ENCODE measurements at regions of chr6 and their contacts with region 1.

Region 1: DNA sequence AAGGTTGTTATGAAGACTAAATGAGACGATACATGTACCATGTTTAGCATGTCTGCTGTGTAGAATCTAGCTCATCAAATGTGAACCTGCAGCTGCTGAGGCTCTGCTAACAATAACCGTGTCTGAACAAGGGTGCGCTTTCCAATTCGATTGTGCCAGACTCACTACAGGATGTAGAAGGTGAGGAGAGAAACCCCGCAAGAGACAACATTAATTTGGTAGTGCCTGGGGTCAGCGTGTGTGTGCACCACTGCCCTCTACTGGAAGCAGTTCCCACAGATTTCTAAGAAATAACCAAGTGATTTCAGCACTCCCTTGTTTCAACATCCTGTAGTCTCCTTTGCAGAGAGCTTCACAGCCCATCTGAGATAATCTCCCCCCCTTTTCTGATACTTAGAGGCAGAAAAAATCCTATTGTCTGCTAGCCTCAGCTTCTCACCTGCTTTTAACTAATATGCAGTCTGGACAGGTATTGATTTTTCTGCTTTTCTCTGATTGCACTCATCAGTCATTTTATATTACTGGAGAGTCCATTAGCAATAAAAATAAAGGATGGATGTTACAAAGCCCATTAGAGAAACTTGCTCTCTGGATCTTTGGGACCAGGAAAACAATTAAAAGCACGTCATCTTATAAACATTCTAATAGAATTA is 96.7 kb upstream of the BACH2 start:
- DNase-seq: peak; percentile 87
- ATAC-seq: peak; percentile 41
- H3K4me3 Mint-ChIP-seq: no peak overlapping the region
- H3K27ac Mint-ChIP-seq: peak overlapping the region; percentile 65
- H3K4me1 Mint-ChIP-seq: peaks cover 76% of the 10 kb centered on the region
- H3K27me3 Mint-ChIP-seq: no peaks in the 10 kb centered on the region

Region 2: GRCh38 chr6:89940225-89941027 is 452.9 kb before region 1 on chr6:
- CTCF ChIA-PET with region 1: interaction called, 7 read pairs
- POLR2A ChIA-PET with region 1: no interaction called
- intact Hi-C with region 1: loop called (anchors 2 to 5 kb)
- DNase-seq: peak; percentile 80
- ATAC-seq: peak; percentile 80
- H3K4me3 Mint-ChIP-seq: no peak overlapping the region
- H3K27ac Mint-ChIP-seq: peak overlapping the region; percentile 47
- H3K4me1 Mint-ChIP-seq: peaks cover 60% of the 10 kb centered on the region
- H3K27me3 Mint-ChIP-seq: no peaks in the 10 kb centered on the region

Region 3: GRCh38 chr6:90285611-90286381 is 107.6 kb before region 1 on chr6:
- CTCF ChIA-PET with region 1: interaction called, 63 read pairs
- POLR2A ChIA-PET with region 1: interaction called, 3 read pairs
- intact Hi-C with region 1: loop called (anchors 1 to 2 kb)
- DNase-seq: peak; percentile 75
- ATAC-seq: peak; percentile 40
- H3K4me3 Mint-ChIP-seq: peak overlapping the region; percentile 62
- H3K27ac Mint-ChIP-seq: peak overlapping the region; percentile 95
- H3K4me1 Mint-ChIP-seq: peaks cover 93% of the 10 kb centered on the region
- H3K27me3 Mint-ChIP-seq: no peaks in the 10 kb centered on the region

Region 4: DNA sequence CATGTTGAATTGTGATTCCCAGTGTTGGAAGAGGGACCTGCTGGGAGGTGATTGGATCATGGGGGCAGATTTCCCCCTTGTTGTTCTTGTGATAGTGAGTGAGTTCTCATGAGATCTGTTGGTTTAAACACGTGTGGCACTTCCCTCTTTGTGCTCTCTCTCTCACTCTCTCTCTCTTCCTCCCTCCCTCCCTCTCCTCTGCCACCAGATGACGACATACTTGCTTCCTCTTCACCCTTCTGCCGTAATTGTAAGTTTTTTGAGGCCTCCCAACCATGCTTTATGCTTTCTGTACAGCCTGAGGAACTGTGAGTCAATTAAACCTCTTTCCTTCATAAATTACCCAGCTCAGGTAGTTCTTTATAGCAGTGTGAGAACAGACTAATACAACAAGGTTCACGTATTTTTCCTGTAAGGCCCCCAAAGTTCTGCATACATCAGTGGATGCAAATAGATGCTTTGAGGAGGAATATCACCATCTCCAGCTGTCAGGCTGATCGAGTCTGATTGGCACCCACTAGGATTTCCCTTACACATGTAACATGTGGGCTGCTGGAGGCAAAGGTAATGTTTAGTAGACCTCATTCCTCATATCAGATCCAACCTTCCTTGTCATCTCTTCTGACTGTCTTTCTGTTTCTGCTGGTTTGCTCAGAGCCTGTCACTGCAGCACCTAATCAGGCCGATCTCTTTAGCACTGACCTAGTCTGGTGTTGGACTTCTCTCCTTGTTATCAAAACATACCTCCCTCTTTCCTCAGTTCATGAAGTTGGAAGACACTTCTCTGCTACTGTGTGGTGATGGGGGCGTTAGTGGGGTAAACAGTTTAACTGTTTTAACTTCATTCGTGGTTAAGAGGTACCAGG is 42.4 kb before region 1 on chr6:
- CTCF ChIA-PET with region 1: interaction called, 6 read pairs
- POLR2A ChIA-PET with region 1: interaction called, 4 read pairs
- intact Hi-C with region 1: loop called (anchors 2 kb)
- DNase-seq: peak; percentile 60
- ATAC-seq: peak; percentile 65
- H3K4me3 Mint-ChIP-seq: peak overlapping the region; percentile 44
- H3K27ac Mint-ChIP-seq: peak overlapping the region; percentile 91
- H3K4me1 Mint-ChIP-seq: peaks cover 54% of the 10 kb centered on the region
- H3K27me3 Mint-ChIP-seq: no peaks in the 10 kb centered on the region

Region 5: DNA sequence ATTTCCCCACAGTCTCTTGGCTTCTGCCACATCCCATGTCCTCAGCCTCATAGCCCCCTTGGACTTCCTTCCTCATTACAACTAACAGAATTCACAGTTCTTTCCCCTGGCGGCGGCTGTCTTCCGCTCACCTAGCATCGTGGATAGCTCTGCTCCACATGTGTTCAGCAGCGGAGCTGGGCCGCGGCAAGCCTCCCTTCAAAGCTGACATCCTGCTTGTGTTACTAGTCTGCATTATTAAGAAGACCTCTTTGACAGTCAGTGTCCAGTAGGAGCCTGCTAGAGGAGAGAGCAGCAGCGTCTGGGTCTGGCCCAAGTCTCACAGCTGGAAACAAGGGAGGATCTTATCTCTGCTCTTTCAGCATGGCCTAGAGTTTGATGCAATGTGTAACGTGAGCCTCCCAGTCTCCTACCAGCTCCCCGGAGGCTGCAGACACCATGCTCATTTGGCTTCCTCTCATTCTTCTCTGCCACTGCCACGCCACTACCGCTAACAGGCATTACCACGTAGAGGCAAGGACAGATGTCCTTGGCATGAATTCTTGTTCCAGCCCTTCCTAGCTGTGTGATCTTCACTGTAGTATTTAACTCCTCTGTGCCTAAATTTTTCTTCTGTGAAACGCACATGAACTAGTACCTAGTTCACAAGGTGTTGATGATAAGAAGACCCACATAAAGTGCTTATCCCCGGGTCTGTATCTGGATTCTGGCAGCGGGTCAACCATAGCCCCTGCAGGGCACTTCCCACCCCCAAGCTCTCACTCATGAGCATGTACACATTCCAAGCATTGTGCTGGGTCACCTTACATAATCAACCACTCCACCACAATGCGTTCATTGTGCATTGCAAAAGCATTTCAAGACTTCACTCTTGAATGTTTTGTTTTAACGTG is 10.4 kb after region 1 on chr6:
- CTCF ChIA-PET with region 1: interaction called, 7 read pairs
- POLR2A ChIA-PET with region 1: interaction called, 6 read pairs
- intact Hi-C with region 1: loop called in 1 of 2 experiments (anchors 1 kb)
- DNase-seq: no peak
- ATAC-seq: no peak
- H3K4me3 Mint-ChIP-seq: peak overlapping the region; percentile 20
- H3K27ac Mint-ChIP-seq: peak overlapping the region; percentile 69
- H3K4me1 Mint-ChIP-seq: peaks cover 81% of the 10 kb centered on the region
- H3K27me3 Mint-ChIP-seq: no peaks in the 10 kb centered on the region

Region 6: DNA sequence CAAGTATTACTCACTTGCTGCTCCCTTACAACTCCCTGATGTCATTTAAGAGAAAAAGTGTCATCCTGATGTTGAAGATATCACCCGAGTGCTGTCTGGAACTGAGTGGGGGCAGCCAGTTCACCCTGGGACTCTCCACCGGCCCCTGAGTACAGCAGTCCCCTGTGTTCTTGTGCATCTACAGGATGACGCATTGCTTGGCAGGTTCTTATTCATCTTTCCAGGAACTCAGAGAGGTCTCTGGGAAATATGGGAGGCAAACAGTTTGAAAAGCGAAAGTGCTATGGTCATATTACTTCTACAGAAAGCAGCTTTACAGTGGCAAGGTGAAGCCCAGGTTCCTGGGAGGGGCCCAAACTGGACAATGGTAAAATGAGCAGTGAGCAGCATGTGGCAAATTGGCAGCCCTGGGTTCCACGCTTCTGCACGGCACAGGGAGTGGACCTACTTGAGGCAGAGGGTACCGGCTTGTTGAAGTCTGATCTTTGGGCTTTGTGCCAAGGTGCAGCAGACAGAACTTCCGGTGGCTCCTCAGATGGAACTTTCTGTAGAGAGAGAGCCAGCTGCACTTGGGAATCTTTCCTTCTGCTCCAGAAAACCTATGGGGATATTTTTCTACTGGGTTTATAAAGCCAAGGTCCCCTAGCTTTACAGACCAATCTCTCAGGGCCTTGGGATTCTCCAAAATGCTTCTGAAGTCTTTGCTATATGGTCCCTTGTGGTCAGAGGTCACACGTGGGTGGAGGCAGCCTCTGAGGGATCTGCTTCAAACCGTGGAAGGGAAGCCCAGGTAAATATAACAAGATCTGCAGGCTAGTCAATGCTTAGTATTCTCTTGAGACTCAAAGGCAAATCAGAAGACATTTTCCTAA is 65.2 kb after region 1 on chr6:
- CTCF ChIA-PET with region 1: interaction called, 25 read pairs
- POLR2A ChIA-PET with region 1: interaction called, 10 read pairs
- intact Hi-C with region 1: loop called (anchors 1 kb)
- DNase-seq: peak; percentile 93
- ATAC-seq: peak; percentile 89
- H3K4me3 Mint-ChIP-seq: peak overlapping the region; percentile 63
- H3K27ac Mint-ChIP-seq: peak overlapping the region; percentile 99
- H3K4me1 Mint-ChIP-seq: peaks cover 92% of the 10 kb centered on the region
- H3K27me3 Mint-ChIP-seq: no peaks in the 10 kb centered on the region

Region 7: DNA sequence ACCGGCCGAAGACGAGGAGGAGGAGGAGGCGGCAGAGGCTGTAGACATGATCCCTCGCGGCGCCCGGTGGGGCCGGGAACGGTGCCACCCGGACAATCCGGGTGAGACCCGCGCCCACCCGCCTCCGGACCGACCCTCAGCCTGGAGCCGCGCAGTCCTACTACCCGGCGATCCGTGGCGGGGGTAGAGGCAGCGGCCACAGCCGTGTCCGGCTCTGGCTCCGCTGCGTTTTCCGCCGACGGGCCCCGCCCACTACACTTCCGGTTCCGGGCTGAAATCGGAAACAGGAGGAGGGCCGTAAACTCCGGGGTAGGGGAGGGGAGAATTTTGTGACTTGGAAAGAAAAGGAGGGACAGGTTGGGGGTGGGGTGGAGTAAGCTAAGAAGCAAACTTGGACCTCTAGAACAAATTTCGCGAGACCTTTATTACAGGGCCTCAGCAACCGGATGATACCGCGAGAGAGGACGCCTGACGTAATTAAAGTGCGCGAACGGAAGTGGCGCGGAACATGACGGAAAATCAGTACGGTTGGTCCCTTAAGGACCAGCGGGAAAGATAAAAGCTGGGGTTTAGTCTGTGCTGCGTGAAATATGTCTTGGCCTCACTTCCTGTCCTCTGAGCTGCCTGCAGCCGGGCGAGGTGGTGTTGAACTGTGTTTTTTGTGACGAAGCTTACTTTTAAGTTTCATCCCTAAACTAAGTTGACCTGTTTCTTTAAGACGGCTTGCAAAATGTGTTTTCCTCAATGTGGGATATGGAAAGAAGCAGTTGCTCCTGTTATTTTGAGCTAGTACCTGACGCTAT is 193.7 kb after region 1 on chr6 and contains the start of gene MAP3K7:
- CTCF ChIA-PET with region 1: no interaction called
- POLR2A ChIA-PET with region 1: no interaction called
- intact Hi-C with region 1: loop called in 1 of 2 experiments (anchors 5 kb)
- DNase-seq: peak; percentile 95
- ATAC-seq: peak; percentile 93
- H3K4me3 Mint-ChIP-seq: peak within 1 kb of the TSS; percentile 95
- H3K27ac Mint-ChIP-seq: peak within 1 kb of the TSS; percentile 98
- H3K4me1 Mint-ChIP-seq: peaks cover 40% of the 10 kb centered on the region
- H3K27me3 Mint-ChIP-seq: peaks cover 7% of the 10 kb centered on the region
- total RNA-seq, gene MAP3K7: 27.5 to 32.6 TPM

Region 8: GRCh38 chr6:91031581-91031980 is 638.2 kb after region 1 on chr6:
- CTCF ChIA-PET with region 1: no interaction called
- POLR2A ChIA-PET with region 1: no interaction called
- intact Hi-C with region 1: no loop called
- DNase-seq: no peak
- ATAC-seq: no peak
- H3K4me3 Mint-ChIP-seq: no peak overlapping the region
- H3K27ac Mint-ChIP-seq: no peak overlapping the region
- H3K4me1 Mint-ChIP-seq: no peaks in the 10 kb centered on the region
- H3K27me3 Mint-ChIP-seq: peaks cover 6% of the 10 kb centered on the region